ENCODE measurements at regions of chr2 and their contacts with region 1.

Region 1: GRCh38 chr2:219278655-219279516 is at the start of gene DNAJB2:
- DNase-seq: peak; percentile 99 to 100 (median 99)
- ATAC-seq: peak; percentile 95 to 97 (median 97)
- H3K4me3 ChIP-seq: peak within 1 kb of the TSS; percentile 60 to 97 (median 82)
- H3K27ac ChIP-seq: peak within 1 kb of the TSS; percentile 91 to 100 (median 99)
- H3K4me1 ChIP-seq: peaks cover 7 to 48% (median 29%) of the 10 kb centered on the region in 12 donors
- H3K27me3 ChIP-seq: no peaks in the 10 kb centered on the region
- CTCF ChIP-seq: no peak
- POLR2A ChIP-seq: peak in 1 of 2 donors; percentile 95
- total RNA-seq, gene DNAJB2: 61.3 to 95.4 (median 74.9) TPM

Region 2: GRCh38 chr2:219142329-219142728 is 136.6 kb before region 1 on chr2:
- intact Hi-C with region 1: no loop called
- DNase-seq: no peak
- ATAC-seq: no peak
- H3K4me3 ChIP-seq: no peak overlapping the region
- H3K27ac ChIP-seq: no peak overlapping the region
- H3K4me1 ChIP-seq: no peaks in the 10 kb centered on the region
- H3K27me3 ChIP-seq: no peaks in the 10 kb centered on the region
- CTCF ChIP-seq: no peak
- POLR2A ChIP-seq: no peak

Region 3: GRCh38 chr2:219207884-219208740 is 70.8 kb before region 1 on chr2:
- intact Hi-C with region 1: no loop called
- DNase-seq: peak in 1 of 5 donors; percentile 6
- ATAC-seq: no peak
- H3K4me3 ChIP-seq: peak overlapping the region in 3 of 12 donors; percentile 72 to 95 (median 77)
- H3K27ac ChIP-seq: peak overlapping the region in 9 of 12 donors; percentile 86 to 98 (median 96)
- H3K4me1 ChIP-seq: peaks cover 0 to 25% (median 17%) of the 10 kb centered on the region in 12 donors
- H3K27me3 ChIP-seq: no peaks in the 10 kb centered on the region
- CTCF ChIP-seq: no peak
- POLR2A ChIP-seq: no peak

Region 4: DNA sequence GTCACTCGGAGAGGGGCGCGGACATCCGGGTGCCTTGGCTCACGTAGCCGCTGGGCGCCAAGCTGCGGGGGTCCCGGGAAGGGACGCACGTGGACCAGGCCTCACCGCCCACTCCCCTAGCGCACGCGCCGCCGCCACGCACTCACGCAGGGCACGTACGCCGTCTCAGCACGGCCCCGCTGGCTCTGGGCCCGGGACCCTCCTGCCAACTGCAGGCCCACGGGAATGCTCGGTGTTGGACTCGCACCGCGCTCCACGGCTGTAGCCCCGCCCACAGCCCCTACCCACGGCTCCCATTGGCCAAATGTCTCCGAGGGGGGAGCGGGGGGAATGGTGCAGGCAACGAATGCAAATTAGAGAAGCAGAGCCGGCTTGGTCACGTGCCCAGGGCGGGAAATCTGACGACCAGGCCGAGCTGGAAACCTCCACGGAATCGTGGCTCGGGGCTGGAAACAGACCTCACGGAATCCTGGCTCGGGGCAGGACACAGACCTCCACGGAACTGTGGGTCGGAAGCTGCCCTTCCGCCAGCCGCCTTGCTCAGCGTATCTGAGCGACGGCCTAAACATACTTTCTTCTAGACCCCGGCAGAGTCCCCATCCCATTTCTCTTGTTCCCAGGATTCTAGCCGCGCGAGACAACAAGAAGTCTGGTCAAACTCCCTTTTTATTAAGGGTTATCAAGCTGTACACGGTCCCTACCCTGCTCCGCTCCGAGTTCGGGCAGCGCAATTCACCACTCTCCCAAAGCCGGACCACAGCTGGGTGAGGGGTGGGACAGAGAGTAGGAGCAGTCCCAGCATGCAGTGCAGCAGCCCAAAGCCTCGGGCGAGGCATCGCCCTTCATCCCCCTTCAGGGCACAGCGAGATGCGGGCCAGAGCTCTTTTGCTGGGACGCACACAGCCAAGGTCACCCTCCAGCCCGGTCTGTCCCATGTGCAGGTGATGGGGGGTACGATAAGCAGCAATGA is 59.9 kb before region 1 on chr2 and contains the start of gene ABCB6:
- intact Hi-C with region 1: loop called in 1 of 10 experiments (anchors 5 kb)
- DNase-seq: peak; percentile 97 to 99 (median 98)
- ATAC-seq: peak; percentile 86 to 93 (median 90)
- H3K4me3 ChIP-seq: peak within 1 kb of the TSS; percentile 19 to 66 (median 58)
- H3K27ac ChIP-seq: peak within 1 kb of the TSS; percentile 68 to 97 (median 90)
- H3K4me1 ChIP-seq: peaks cover 6 to 42% (median 33%) of the 10 kb centered on the region in 12 donors
- H3K27me3 ChIP-seq: no peaks in the 10 kb centered on the region
- CTCF ChIP-seq: no peak
- POLR2A ChIP-seq: peak; percentile 7 to 84
- total RNA-seq, gene ABCB6: 12.1 to 28.1 (median 17.9) TPM

Region 5: DNA sequence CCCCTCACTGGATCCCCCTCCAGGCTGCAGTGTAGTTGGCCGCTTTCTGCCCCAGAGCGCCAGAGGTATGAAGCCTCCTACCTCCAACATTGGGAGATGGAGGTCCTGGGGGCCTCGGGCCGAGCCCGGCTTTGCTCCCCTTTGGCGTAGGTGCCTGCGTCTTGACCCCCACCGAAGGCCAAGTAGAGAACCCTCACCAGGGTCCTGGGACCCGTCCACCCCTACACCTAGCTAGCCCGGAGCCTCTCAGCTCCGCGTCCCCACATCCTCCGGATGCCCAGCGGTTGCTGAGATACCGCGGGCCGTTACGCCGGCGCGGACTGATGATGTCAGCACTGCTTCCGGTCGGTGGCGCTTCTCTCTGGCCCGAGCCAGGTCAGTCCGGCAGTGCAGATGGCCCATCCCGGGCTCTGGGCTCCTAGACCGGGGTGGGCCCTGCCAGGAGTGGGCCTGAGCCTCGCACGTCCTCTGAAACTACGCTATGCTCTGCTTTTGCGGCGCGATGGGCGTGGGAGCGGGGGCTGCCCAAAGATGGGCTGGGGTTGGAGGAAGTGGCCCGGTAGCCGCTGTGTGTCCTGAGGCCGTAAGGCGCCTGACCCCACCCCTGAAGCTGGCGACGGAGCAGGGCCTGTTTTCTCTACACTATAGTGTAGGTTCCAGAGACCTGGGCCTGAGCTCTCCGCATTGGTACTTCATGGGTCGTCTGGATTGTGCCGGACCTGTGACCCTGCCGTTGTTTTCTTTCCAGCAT is 33.6 kb before region 1 on chr2 and contains the starts of genes GLB1L and STK16:
- intact Hi-C with region 1: loop called in 1 of 10 experiments (anchors 2 kb)
- DNase-seq: peak; percentile 94 to 97 (median 95)
- ATAC-seq: peak; percentile 85 to 95 (median 95)
- H3K4me3 ChIP-seq: peak within 1 kb of the TSS; percentile 67 to 95 (median 84)
- H3K27ac ChIP-seq: peak within 1 kb of the TSS; percentile 77 to 98 (median 93)
- H3K4me1 ChIP-seq: peaks cover 6 to 54% (median 33%) of the 10 kb centered on the region in 12 donors
- H3K27me3 ChIP-seq: no peaks in the 10 kb centered on the region
- CTCF ChIP-seq: no peak
- POLR2A ChIP-seq: peak in 1 of 2 donors; percentile 80
- total RNA-seq, gene GLB1L: 1.6 to 7.9 (median 2.5) TPM
- total RNA-seq, gene STK16: 13.8 to 26.9 (median 19.1) TPM

Region 6: GRCh38 chr2:219253753-219254590 is 24.9 kb before region 1 on chr2 and contains the start of gene TUBA4A:
- intact Hi-C with region 1: loop called in 1 of 10 experiments (anchors 2 kb)
- DNase-seq: peak; percentile 86 to 93 (median 88)
- ATAC-seq: peak; percentile 82 to 93 (median 92)
- H3K4me3 ChIP-seq: peak within 1 kb of the TSS; percentile 54 to 92 (median 74)
- H3K27ac ChIP-seq: peak within 1 kb of the TSS; percentile 7 to 91 (median 87)
- H3K4me1 ChIP-seq: peaks cover 6 to 57% (median 39%) of the 10 kb centered on the region in 12 donors
- H3K27me3 ChIP-seq: peaks cover 0 to 24% (median 0%) of the 10 kb centered on the region in 9 donors
- CTCF ChIP-seq: peak in 5 of 12 donors; percentile 13 to 26 (median 19)
- POLR2A ChIP-seq: peak; percentile 88 to 99
- total RNA-seq, gene TUBA4A: 137 to 381 (median 193) TPM

Region 7: GRCh38 chr2:219294356-219295351 is 15.8 kb after region 1 on chr2:
- intact Hi-C with region 1: loop called in 8 of 10 experiments (anchors 1 to 2 kb)
- DNase-seq: peak; percentile 83 to 93 (median 89)
- ATAC-seq: peak; percentile 48 to 92 (median 89)
- H3K4me3 ChIP-seq: peak overlapping the region; percentile 22 to 77 (median 64)
- H3K27ac ChIP-seq: peak overlapping the region; percentile 11 to 93 (median 78)
- H3K4me1 ChIP-seq: peaks cover 0 to 24% (median 11%) of the 10 kb centered on the region in 12 donors
- H3K27me3 ChIP-seq: peaks cover 0 to 8% (median 0%) of the 10 kb centered on the region in 9 donors
- CTCF ChIP-seq: peak in 11 of 12 donors; percentile 99 to 100 (median 100)
- POLR2A ChIP-seq: peak in 1 of 2 donors; percentile 66

Region 8: GRCh38 chr2:219769090-219769910 is 490.4 kb after region 1 on chr2:
- intact Hi-C with region 1: loop called in 1 of 10 experiments (anchors 5 kb)
- DNase-seq: peak; percentile 82 to 92 (median 84)
- ATAC-seq: peak; percentile 86 to 91 (median 86)
- H3K4me3 ChIP-seq: peak overlapping the region in 2 of 12 donors; percentile 0 to 3
- H3K27ac ChIP-seq: peak overlapping the region; percentile 59 to 96 (median 86)
- H3K4me1 ChIP-seq: peaks cover 0 to 32% (median 14%) of the 10 kb centered on the region in 12 donors
- H3K27me3 ChIP-seq: no peaks in the 10 kb centered on the region
- CTCF ChIP-seq: no peak
- POLR2A ChIP-seq: no peak

Measured in heart left ventricle (tissue), 16 donors.